GM12878 (cell line): ENCODE measurements at regions of chr1 and their contacts with region 1.

Region 1: GRCh38 chr1:213051127-213051880 is at the start of gene RPS6KC1:
- DNase-seq: no peak
- ATAC-seq: peak; percentile 98
- H3K4me3 ChIP-seq: peak within 1 kb of the TSS; percentile 94
- H3K27ac ChIP-seq: peak within 1 kb of the TSS; percentile 68
- H3K4me1 ChIP-seq: peaks cover 6% of the 10 kb centered on the region; the same call in 1 of the 2 replicates
- H3K27me3 ChIP-seq: no peaks in the 10 kb centered on the region
- CTCF ChIP-seq: no peak
- EP300 ChIP-seq: peak in 1 of 2 experiments; percentile 12; a peak in 1 of 4 replicates
- POLR2A ChIP-seq: peak; percentile 85
- RAD21 ChIP-seq: no peak
- polyA plus RNA-seq, gene RPS6KC1: 2.9 to 3.6 TPM

Region 2: GRCh38 chr1:213015099-213016050 is 35.9 kb before region 1 on chr1 and contains the start of gene ANGEL2:
- CTCF ChIA-PET with region 1: no interaction called
- POLR2A ChIA-PET with region 1: interaction called, 5 read pairs
- RAD21 ChIA-PET with region 1: interaction called, 3 read pairs
- SMC1A ChIA-PET with region 1: interaction called, 6 read pairs
- in situ Hi-C with region 1: no loop called
- intact Hi-C with region 1: loop called (anchors 2 kb)
- DNase-seq: peak; percentile 94
- ATAC-seq: peak; percentile 96
- H3K4me3 ChIP-seq: peak within 1 kb of the TSS; percentile 91
- H3K27ac ChIP-seq: peak within 1 kb of the TSS; percentile 92
- H3K4me1 ChIP-seq: no peaks in the 10 kb centered on the region
- H3K27me3 ChIP-seq: no peaks in the 10 kb centered on the region
- CTCF ChIP-seq: no peak
- EP300 ChIP-seq: no peak; a peak in 1 of 4 replicates
- POLR2A ChIP-seq: peak; percentile 90
- RAD21 ChIP-seq: no peak
- polyA plus RNA-seq, gene ANGEL2: 6.3 to 13.6 TPM

Region 3: DNA sequence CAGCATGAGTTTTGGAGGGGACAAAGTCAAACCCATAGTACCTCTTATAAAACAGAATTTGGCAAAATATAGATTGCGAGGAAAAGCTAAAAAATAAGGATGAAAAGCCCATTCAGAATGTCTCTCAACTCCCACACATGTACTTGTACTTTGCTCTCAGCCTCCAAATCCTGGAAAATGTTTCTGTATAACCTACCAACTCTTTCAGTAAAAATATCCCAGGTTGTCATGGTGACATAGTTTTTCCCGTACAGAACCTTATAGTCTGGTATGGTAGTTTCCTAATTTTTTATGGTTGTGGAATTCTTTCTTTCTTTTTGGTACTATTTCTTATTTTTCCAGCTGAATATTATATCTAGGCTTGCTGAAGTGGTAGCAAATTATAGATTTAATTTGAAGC is 15.7 kb before region 1 on chr1:
- CTCF ChIA-PET with region 1: interaction called, 7 read pairs
- POLR2A ChIA-PET with region 1: interaction called, 9 read pairs
- RAD21 ChIA-PET with region 1: no interaction called
- SMC1A ChIA-PET with region 1: interaction called, 3 read pairs
- in situ Hi-C with region 1: no loop called
- intact Hi-C with region 1: loop called (anchors 2 kb)
- DNase-seq: no peak
- ATAC-seq: no peak
- H3K4me3 ChIP-seq: no peak overlapping the region
- H3K27ac ChIP-seq: no peak overlapping the region
- H3K4me1 ChIP-seq: no peaks in the 10 kb centered on the region
- H3K27me3 ChIP-seq: no peaks in the 10 kb centered on the region
- CTCF ChIP-seq: no peak
- EP300 ChIP-seq: no peak
- POLR2A ChIP-seq: no peak
- RAD21 ChIP-seq: no peak

Region 4: DNA sequence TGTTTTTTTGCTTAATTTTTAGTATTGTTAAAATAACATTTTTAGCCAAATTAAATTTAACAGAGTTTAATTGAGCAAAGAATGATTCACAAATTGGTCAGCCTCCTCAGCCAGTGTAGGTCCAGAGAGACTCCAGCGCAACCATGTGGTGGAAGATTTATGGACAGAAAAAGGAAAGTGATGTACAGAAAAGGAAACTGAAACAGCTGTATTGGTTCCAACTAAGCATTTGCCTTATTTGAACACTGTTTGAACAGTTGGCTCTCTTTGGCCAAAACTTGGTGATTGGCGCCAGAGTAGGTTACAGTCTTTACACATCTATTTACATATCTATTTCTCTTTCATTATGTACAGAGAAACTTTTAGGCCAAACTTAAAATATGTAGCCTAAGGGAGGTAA is 19.1 kb after region 1 on chr1:
- CTCF ChIA-PET with region 1: interaction called, 8 read pairs
- POLR2A ChIA-PET with region 1: interaction called, 3 read pairs
- RAD21 ChIA-PET with region 1: interaction called, 4 read pairs
- SMC1A ChIA-PET with region 1: interaction called, 13 read pairs
- in situ Hi-C with region 1: no loop called
- intact Hi-C with region 1: no loop called
- DNase-seq: peak; percentile 84
- ATAC-seq: peak; percentile 92
- H3K4me3 ChIP-seq: 0 out of 2 replicates have a peak overlapping the region, but pooled peaks have one; percentile 6
- H3K27ac ChIP-seq: peak overlapping the region; percentile 73
- H3K4me1 ChIP-seq: peaks cover 10% of the 10 kb centered on the region
- H3K27me3 ChIP-seq: no peaks in the 10 kb centered on the region
- CTCF ChIP-seq: peak; percentile 33 to 47 (median 34); a peak in 4 of 6 replicates
- EP300 ChIP-seq: no peak
- POLR2A ChIP-seq: no peak
- RAD21 ChIP-seq: peak; percentile 72

Region 5: GRCh38 chr1:214427871-214428277 is 1376.6 kb after region 1 on chr1:
- CTCF ChIA-PET with region 1: no interaction called
- POLR2A ChIA-PET with region 1: interaction called, 13 read pairs
- RAD21 ChIA-PET with region 1: no interaction called
- SMC1A ChIA-PET with region 1: no interaction called
- in situ Hi-C with region 1: no loop called
- intact Hi-C with region 1: no loop called
- DNase-seq: peak; percentile 80
- ATAC-seq: peak; percentile 97
- H3K4me3 ChIP-seq: no peak overlapping the region
- H3K27ac ChIP-seq: peak overlapping the region; percentile 57
- H3K4me1 ChIP-seq: peaks cover 7% of the 10 kb centered on the region
- H3K27me3 ChIP-seq: no peaks in the 10 kb centered on the region
- CTCF ChIP-seq: no peak
- EP300 ChIP-seq: peak; percentile 56 to 75; a peak in 3 of 4 replicates
- POLR2A ChIP-seq: no peak; the same call in 1 of the 2 replicates
- RAD21 ChIP-seq: no peak